SK-N-SH (cell line): ENCODE measurements at regions of chr3 and their contacts with region 1.

Region 1: GRCh38 chr3:32285891-32286290 is 47.4 kb downstream of the CMTM8 start:
- DNase-seq: no peak
- H3K4me3 ChIP-seq: no peak overlapping the region
- H3K27ac ChIP-seq: no peak overlapping the region
- H3K4me1 ChIP-seq: no peaks in the 10 kb centered on the region
- H3K27me3 ChIP-seq: no peaks in the 10 kb centered on the region
- CTCF ChIP-seq: no peak
- EP300 ChIP-seq: no peak
- RAD21 ChIP-seq: no peak

Region 2: DNA sequence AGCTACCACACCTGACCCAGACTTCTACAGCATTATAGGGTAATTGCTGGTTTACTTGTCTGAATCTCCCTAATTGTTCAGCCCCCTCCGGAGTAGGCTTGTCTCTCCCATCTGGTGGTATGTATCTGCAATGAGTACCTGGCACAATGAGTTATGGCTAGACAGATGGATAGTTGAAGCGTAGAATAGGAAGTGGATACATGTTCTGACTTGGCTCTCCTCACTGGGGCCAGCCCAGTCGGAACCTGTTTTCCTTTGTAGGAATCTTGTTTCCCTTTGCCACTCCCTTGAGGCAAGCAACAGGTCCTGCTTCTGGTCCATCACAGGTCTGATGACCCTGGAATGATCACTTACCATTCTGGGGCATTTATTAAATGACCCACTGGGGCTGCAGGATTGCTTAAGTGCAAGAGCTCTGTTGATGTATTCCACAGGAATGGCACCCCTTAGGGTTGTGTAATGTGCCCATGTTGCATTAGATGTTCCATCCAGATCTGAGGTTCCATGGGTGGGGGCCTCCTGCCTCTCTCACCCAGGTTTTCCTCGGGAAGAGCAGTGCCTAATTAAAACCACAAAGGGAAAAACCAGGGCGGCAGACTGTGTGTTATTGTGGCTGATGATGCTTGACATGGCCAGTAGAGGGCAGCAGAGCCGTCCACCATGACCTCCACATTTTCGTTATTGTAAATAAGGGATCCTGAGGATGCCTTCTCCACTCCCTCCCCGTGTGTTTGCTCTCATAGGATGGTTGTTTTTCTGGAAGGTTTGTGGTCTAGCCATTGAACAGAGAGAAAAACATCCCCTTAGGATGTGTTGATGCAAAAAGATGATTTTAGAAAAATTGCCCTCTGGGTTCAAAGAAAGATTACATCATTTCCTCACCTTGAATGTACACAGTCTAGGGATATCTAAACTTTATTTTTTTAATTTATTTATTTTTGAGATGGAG is 10.6 kb after region 1 on chr3:
- CTCF ChIA-PET with region 1: interaction called, 19 read pairs
- POLR2A ChIA-PET with region 1: no interaction called
- DNase-seq: peak; percentile 77
- H3K4me3 ChIP-seq: no peak overlapping the region; a peak in 1 of 4 replicates
- H3K27ac ChIP-seq: no peak overlapping the region
- H3K4me1 ChIP-seq: peaks cover 0 to 2% of the 10 kb centered on the region in 2 experiments; a peak in 1 of 4 replicates
- H3K27me3 ChIP-seq: no peaks in the 10 kb centered on the region
- CTCF ChIP-seq: peak; percentile 91
- EP300 ChIP-seq: no peak
- RAD21 ChIP-seq: peak; percentile 81